ENCODE measurements at regions of chrX and their contacts with region 1.

Region 1: DNA sequence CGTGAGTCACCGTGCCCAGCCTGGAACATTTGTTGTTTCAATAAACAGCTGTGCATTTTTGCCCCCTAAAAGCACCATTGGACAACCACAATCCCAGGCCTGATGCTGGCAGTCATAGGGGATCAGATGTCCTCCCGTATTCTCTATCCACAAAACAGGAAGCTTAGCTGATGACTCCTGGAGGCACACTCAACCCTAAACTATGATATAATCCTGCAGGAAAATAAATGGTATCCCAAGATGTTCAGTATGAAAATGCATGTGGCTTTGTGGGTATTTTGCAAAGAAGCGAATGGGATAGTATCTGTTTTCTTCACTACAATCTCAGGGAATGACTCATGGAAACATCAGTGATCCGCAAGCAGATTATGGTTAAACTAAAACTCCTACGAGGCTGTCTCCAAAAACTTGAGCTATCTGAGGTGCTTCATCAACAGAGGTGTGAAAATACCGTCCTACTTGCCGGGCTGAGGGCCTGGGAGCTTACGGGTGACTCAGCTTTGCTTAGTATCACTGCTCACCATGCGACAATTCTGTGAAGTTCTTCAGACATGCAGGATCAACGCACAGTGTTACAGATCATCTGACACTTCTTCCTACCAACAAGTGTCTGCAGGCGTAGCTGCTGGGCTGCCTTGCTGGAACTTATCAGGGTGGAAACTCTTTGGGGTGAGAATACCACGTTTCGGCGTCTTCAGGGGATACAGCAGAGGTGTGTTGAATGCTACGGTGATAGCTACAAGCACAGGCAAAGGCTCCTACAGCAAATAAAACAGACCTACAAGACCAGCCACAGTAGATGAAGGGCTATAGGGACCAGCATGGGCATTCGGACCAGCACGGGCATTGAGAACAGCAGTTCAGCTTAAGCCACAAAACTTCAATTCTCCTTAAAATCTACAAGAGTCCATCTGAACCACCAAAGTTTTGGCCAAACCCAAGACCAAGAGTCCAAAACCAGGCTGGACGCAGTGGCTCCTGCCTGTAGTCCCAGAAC is 148.5 kb downstream of the DHRSX start:
- DNase-seq: peak; percentile 42 to 72
- H3K4me3 ChIP-seq: no peak overlapping the region
- H3K27ac ChIP-seq: peak overlapping the region; percentile 67
- H3K4me1 ChIP-seq: peaks cover 16% of the 10 kb centered on the region
- H3K27me3 ChIP-seq: no peaks in the 10 kb centered on the region
- CTCF ChIP-seq: no peak

Region 2: GRCh38 chrX:2385224-2385623 is 32.9 kb after region 1 on chrX:
- CTCF ChIA-PET with region 1: no interaction called
- POLR2A ChIA-PET with region 1: no interaction called
- intact Hi-C with region 1: loop called (anchors 5 kb)
- DNase-seq: peak in 1 of 2 experiments; percentile 61
- H3K4me3 ChIP-seq: no peak overlapping the region
- H3K27ac ChIP-seq: no peak overlapping the region
- H3K4me1 ChIP-seq: peaks cover 16% of the 10 kb centered on the region
- H3K27me3 ChIP-seq: no peaks in the 10 kb centered on the region
- CTCF ChIP-seq: no peak

Region 3: GRCh38 chrX:2538031-2538757 is 185.9 kb after region 1 on chrX:
- CTCF ChIA-PET with region 1: no interaction called
- POLR2A ChIA-PET with region 1: no interaction called
- intact Hi-C with region 1: no loop called
- DNase-seq: no peak
- H3K4me3 ChIP-seq: no peak overlapping the region
- H3K27ac ChIP-seq: no peak overlapping the region
- H3K4me1 ChIP-seq: no peaks in the 10 kb centered on the region
- H3K27me3 ChIP-seq: peaks cover 23% of the 10 kb centered on the region; the same call in 1 of the 2 replicates
- CTCF ChIP-seq: no peak

Region 4: GRCh38 chrX:2574341-2574740 is 222.0 kb after region 1 on chrX:
- CTCF ChIA-PET with region 1: no interaction called
- POLR2A ChIA-PET with region 1: no interaction called
- intact Hi-C with region 1: loop called (anchors 5 kb)
- DNase-seq: no peak
- H3K4me3 ChIP-seq: no peak overlapping the region
- H3K27ac ChIP-seq: no peak overlapping the region
- H3K4me1 ChIP-seq: no peaks in the 10 kb centered on the region
- H3K27me3 ChIP-seq: no peaks in the 10 kb centered on the region
- CTCF ChIP-seq: no peak

Measured in PC-9 (cell line).